Dendritic cell treated with granulocyte-macrophage colony-stimulating factor and Interleukin-4, amounts not matched to agents 40 ng/mL and 50 ng/mL, for 4 days (primary cell): ENCODE measurements at regions of chr22 and their contacts with region 1.

Region 1: DNA sequence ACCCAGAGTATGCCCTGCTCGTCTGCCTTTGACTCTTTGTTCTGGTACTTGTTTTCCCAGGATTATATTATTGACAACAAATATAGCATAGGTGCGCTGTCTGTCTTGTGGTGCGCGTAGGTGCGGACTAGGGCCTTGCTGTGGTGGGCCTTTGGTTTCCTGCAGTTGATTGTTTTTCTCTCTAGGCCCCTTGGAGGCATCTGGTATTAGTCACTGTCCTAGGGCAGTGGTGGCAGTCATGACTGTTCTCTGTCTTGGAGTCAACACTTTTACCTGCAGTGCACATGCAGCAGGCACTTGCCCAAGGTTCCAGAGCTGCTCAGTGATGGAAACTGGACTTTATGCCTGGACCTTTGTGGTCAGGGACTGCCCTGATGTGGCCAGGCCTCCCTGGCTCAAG is 18.6 kb downstream of the PPP6R2 start:
- H3K4me3 Mint-ChIP-seq: no peak overlapping the region
- H3K27ac Mint-ChIP-seq: peak overlapping the region; percentile 28
- H3K4me1 Mint-ChIP-seq: peaks cover 46% of the 10 kb centered on the region
- H3K27me3 Mint-ChIP-seq: no peaks in the 10 kb centered on the region

Region 2: GRCh38 chr22:50250555-50251476 is 110.9 kb before region 1 on chr22 and contains the start of gene HDAC10:
- intact Hi-C with region 1: loop called (anchors 1 kb)
- H3K4me3 Mint-ChIP-seq: peak within 1 kb of the TSS; percentile 83
- H3K27ac Mint-ChIP-seq: peak within 1 kb of the TSS; percentile 61
- H3K4me1 Mint-ChIP-seq: peaks cover 45% of the 10 kb centered on the region
- H3K27me3 Mint-ChIP-seq: no peaks in the 10 kb centered on the region

Region 3: GRCh38 chr22:50474668-50475492 is 113.2 kb after region 1 on chr22 and contains the start of gene SBF1:
- intact Hi-C with region 1: loop called (anchors 10 kb)
- H3K4me3 Mint-ChIP-seq: peak within 1 kb of the TSS; percentile 90
- H3K27ac Mint-ChIP-seq: peak within 1 kb of the TSS; percentile 71
- H3K4me1 Mint-ChIP-seq: peaks cover 55% of the 10 kb centered on the region
- H3K27me3 Mint-ChIP-seq: peaks cover 35% of the 10 kb centered on the region

Region 4: DNA sequence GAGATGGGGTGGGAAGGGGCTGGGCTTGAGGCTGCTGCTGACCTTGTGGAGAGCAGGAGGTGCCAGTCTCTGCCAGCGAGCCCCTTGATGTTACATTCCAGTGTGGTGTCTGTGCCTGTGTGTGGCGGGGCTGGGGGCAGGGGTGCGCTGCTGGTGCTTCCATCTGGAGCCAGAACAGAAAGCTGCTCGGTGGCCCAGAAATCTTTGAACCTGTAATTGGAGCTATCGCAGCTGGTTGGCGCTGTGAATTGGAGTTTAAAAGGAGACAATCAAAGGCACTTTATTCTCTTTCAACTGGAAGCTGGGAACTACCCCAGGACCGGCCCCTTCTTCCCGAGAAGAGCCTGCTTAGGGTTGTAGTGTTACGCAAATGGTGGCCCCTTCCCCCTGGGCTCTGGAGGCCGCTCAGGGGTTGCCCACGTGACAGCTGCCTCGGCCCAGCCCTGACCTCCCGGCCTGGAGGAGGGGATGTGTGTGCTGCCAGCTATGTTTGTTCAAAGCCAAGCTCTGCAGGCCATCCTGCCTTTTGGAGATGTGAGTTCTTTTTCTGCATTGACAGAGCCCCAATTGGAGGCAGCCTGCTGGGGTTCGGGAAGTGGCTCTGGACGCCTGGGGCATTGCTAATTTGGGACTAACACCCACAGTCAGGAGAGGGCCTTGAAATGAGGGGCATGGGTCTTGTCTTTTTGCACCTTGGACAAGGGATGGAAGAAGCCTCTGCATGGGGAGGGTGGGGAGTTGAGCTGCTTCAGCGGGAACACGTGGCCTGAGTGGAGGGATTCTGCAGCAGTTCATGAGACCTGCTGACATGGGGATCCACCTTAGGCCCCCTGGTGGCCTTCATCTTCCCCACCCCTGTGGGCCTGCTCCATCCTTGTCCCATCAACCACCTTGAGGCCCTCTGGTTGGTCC is 280.3 kb after region 1 on chr22:
- intact Hi-C with region 1: no loop called
- H3K4me3 Mint-ChIP-seq: no peak overlapping the region
- H3K27ac Mint-ChIP-seq: no peak overlapping the region
- H3K4me1 Mint-ChIP-seq: peaks cover 11% of the 10 kb centered on the region
- H3K27me3 Mint-ChIP-seq: peaks cover 13% of the 10 kb centered on the region